H1 (cell line): ENCODE measurements at regions of chr15 and their contacts with region 1.

Region 1: GRCh38 chr15:66287461-66288057 is 5.8 kb upstream of the DIS3L start:
- DNase-seq: no peak
- H3K4me3 ChIP-seq: no peak overlapping the region
- H3K27ac ChIP-seq: no peak overlapping the region
- H3K4me1 ChIP-seq: no peaks in the 10 kb centered on the region
- H3K27me3 ChIP-seq: no peaks in the 10 kb centered on the region
- CTCF ChIP-seq: peak in 2 of 3 experiments; percentile 28 to 39; a peak in 2 of 4 replicates
- EP300 ChIP-seq: no peak
- POLR2A ChIP-seq: no peak
- RAD21 ChIP-seq: peak in 1 of 2 experiments; percentile 57

Region 2: DNA sequence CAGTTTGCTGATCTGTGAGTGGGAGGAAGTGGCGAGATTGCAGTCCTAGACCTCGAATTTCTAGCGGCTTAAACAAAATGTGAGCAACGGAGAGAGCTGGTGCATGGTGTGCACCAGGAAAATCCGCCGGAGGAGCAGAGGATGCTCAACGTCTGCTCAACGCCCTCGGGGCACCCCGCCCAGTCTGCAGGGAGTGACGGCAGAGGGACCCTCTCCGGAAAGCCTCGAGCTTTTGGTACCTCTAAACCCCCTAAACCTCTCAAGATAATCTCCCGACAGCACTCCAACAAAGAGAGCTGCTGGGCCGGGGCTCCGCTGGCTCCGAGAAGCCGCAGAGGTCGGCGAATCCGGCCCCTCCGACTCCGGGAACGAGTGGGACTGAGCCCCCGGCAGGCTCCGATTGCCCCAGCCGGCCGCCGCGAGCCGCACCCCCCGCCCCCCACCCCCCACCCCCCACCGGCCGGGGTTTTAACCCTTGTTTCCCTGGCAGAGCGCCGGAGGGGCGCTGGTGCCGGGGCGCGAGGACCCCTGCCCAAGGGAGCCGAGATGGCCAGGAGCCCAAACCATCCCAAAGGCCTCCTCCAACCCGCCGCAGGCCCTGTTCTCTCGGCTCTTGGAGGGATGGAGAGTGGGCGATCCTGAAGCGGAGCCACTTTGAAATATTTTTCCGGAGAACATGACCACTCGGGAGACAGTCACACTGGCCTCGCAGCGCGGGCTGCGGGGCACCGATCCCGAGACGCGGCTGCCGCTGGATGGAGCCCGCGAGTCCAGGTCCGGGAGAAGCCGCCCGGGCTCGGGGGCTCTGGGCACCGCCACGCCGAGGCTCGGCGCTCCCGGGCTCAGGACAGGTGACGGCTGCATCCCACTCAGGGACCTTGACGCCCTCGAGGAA is 35.5 kb before region 1 on chr15:
- CTCF ChIA-PET with region 1: interaction called, 17 read pairs
- POLR2A ChIA-PET with region 1: interaction called, 4 read pairs
- DNase-seq: peak in 1 of 2 experiments; percentile 84
- H3K4me3 ChIP-seq: peak overlapping the region; percentile 62 to 88 (median 81)
- H3K27ac ChIP-seq: no peak overlapping the region
- H3K4me1 ChIP-seq: peaks cover 13 to 24% (median 14%) of the 10 kb centered on the region in 4 experiments
- H3K27me3 ChIP-seq: peaks cover 20 to 64% (median 56%) of the 10 kb centered on the region in 4 experiments
- CTCF ChIP-seq: peak; percentile 57 to 69 (median 62)
- EP300 ChIP-seq: no peak
- POLR2A ChIP-seq: no peak
- RAD21 ChIP-seq: peak; percentile 45 to 60; a peak in 3 of 4 replicates